Heart left ventricle (tissue), 16 donors: ENCODE measurements at regions of chr1 and their contacts with region 1.

Region 1: GRCh38 chr1:95309031-95309471 is 75.0 kb downstream of the RWDD3 start:
- DNase-seq: peak in 1 of 5 donors; percentile 12
- ATAC-seq: peak; percentile 42 to 74 (median 58)
- H3K4me3 ChIP-seq: no peak overlapping the region
- H3K27ac ChIP-seq: no peak overlapping the region
- H3K4me1 ChIP-seq: no peaks in the 10 kb centered on the region
- H3K27me3 ChIP-seq: peaks cover 0 to 19% (median 0%) of the 10 kb centered on the region in 9 donors
- CTCF ChIP-seq: peak; percentile 21 to 69 (median 56)
- POLR2A ChIP-seq: no peak

Region 2: GRCh38 chr1:95467036-95467435 is 158.0 kb after region 1 on chr1:
- intact Hi-C with region 1: loop called in 6 of 10 experiments (anchors 5 to 10 kb)
- DNase-seq: no peak
- ATAC-seq: no peak
- H3K4me3 ChIP-seq: no peak overlapping the region
- H3K27ac ChIP-seq: no peak overlapping the region
- H3K4me1 ChIP-seq: no peaks in the 10 kb centered on the region
- H3K27me3 ChIP-seq: no peaks in the 10 kb centered on the region
- CTCF ChIP-seq: peak in 8 of 12 donors; percentile 8 to 39 (median 23)
- POLR2A ChIP-seq: no peak